HEK293 (cell line): ENCODE measurements at regions of chr18 and their contacts with region 1.

Region 1: DNA sequence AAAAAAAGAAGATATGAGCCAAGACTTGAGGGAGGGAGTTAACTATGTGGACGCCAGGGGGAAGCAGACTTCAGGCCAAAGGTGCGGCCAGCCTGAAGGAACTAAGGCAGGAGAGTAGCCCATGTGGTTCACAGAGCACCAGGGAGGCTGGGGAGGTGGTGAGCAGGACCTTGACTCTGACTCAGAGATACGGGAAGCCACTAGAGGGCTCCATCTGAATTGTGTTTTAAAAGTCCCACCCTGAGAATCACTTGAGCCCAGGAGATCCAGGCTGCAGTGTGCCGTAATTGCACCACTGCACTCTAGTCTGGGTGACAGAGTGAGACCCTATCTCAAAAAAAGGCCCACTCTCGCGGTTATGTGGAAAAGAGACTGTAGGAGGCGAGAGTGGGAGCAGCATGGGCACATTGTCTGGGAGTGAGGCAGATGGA is 12.3 kb downstream of the CEP192 start:
- H3K4me3 ChIP-seq: no peak overlapping the region
- H3K27ac ChIP-seq: no peak overlapping the region
- H3K4me1 ChIP-seq: no peaks in the 10 kb centered on the region
- CTCF ChIP-seq: peak; percentile 79

Region 2: DNA sequence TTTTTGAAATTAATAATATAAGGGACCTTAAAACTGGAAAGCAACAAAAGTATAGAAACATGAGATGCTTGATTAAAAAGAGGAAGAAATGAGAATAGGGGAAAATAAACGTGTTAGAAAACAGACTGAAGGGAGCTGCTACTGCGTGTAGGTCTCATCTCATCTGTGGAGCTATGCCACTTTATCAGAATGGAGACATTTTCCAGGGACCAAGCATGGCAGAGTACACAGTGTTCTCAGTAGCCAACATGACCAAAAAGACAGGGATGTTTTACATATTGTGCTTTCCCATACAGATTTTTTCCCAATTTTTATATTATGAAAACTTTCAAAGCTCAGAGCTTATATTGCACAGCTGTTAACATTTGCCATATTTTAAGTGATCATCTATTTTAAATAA is 10.8 kb after region 1 on chr18:
- CTCF ChIA-PET with region 1: interaction called, 13 read pairs
- POLR2A ChIA-PET with region 1: interaction called, 9 read pairs
- H3K4me3 ChIP-seq: no peak overlapping the region
- H3K27ac ChIP-seq: no peak overlapping the region
- H3K4me1 ChIP-seq: no peaks in the 10 kb centered on the region
- CTCF ChIP-seq: no peak